Lower leg skin (tissue), 4 donors: ENCODE measurements at regions of chr20 and their contacts with region 1.

Region 1: GRCh38 chr20:6178537-6178936 is 55.7 kb upstream of the FERMT1 start:
- DNase-seq: no peak
- H3K4me3 ChIP-seq: no peak overlapping the region
- CTCF ChIP-seq: no peak
- POLR2A ChIP-seq: no peak

Region 2: GRCh38 chr20:5234158-5234557 is 944.4 kb before region 1 on chr20:
- intact Hi-C with region 1: no loop called
- DNase-seq: no peak
- H3K4me3 ChIP-seq: no peak overlapping the region
- CTCF ChIP-seq: no peak
- POLR2A ChIP-seq: no peak

Region 3: DNA sequence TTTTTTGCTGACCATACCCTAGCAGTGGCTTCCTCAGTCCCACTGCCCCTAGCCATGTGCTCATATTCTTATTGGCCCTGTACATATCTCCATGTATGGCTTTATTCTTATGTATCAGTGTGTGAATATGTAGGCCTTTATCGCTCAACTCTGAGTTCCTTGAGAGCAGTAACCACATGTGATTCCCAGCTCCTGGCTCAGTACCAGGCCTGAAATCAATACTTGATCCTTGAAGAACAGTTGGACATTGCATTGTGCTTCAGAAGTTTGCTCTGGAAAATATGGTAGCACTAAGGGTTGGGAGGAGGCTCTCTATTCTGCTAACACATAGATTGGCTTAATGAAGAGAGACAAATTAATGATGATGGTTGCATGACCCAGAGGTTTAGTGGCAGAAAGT is 63.1 kb after region 1 on chr20:
- intact Hi-C with region 1: no loop called
- DNase-seq: no peak
- H3K4me3 ChIP-seq: no peak overlapping the region
- CTCF ChIP-seq: no peak
- POLR2A ChIP-seq: no peak

Region 4: GRCh38 chr20:7193681-7194080 is 1015.1 kb after region 1 on chr20:
- intact Hi-C with region 1: loop called (anchors 5 kb)
- DNase-seq: no peak
- H3K4me3 ChIP-seq: no peak overlapping the region
- CTCF ChIP-seq: no peak
- POLR2A ChIP-seq: no peak